Right ventricle myocardium superior (tissue), 1 donor: ENCODE measurements at regions of chr1 and their contacts with region 1.

Region 1: DNA sequence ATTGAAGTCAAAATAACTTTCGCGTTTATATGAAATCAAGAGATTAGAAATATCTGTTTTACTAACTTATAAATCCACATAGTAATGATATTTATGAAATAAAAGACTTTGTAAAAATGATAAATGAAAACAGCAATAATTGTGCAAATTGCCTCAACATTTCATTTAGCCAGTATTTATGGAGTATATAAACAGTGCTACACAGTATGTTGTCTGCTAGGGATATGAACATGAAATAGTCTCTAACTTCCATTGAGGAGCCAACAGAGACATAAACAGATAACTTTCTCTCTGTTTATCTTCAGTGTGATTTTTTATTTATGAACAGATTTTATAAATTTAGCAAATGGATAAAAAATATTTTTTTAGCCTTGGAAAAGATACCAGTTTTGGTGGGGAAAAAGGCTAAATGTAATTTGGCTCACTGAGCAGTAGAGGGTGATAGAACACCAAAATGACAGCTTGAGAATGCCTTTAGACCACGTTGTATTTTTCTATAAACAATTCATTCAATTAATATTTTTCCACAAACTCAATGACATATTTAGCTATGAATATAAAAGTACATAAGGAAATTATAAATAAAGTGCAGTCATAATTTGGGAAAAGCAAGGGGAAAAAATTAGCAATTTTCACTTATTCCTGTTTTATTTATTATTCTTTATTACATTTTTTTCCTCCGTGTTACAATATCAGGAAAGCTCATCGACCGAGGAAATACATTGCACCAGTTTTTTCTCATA is 47.5 kb upstream of the EEIG2 start:
- DNase-seq: no peak
- ATAC-seq: peak; percentile 68

Region 2: DNA sequence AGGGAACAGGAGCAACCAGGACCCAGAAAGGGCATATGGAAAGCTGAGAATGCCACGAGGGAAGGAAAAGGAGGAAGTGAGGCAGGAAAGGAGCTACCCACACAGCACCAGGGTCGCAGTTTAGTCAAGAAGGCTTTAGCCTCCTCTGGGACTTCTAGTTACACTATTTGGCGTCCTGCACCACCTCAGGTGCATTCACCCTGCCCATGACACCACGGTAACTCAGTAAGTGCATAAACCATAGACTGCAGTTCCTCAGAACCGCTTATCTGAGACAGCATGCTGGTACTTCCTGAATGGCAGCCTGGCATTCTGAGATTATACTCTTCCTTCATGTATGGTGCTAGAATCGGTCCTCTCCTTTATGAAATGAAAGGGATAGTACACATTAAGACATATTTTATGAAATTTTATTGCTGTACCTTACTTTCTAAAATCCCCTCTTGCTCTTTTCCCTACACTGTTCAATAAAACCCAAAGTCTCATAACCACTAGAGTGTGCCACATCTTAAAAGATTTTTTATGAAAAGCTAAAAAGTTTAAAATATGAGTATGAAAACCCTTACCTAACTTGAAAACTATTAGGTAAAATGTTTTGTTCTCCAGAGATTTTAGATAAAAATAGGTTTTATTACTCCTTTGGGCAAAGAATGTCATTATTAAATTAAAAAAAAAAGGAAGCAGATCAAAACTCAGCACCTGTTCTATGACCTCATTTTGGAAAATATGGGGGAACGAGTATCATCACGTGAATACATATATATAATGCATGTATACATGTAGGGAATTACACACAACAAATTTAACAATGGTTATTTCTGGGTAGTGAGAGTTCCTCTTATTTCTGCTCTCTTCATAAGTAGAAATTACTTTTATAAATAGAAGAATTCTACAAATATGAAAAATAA is 614.7 kb before region 1 on chr1:
- intact Hi-C with region 1: no loop called
- DNase-seq: no peak
- ATAC-seq: no peak

Region 3: DNA sequence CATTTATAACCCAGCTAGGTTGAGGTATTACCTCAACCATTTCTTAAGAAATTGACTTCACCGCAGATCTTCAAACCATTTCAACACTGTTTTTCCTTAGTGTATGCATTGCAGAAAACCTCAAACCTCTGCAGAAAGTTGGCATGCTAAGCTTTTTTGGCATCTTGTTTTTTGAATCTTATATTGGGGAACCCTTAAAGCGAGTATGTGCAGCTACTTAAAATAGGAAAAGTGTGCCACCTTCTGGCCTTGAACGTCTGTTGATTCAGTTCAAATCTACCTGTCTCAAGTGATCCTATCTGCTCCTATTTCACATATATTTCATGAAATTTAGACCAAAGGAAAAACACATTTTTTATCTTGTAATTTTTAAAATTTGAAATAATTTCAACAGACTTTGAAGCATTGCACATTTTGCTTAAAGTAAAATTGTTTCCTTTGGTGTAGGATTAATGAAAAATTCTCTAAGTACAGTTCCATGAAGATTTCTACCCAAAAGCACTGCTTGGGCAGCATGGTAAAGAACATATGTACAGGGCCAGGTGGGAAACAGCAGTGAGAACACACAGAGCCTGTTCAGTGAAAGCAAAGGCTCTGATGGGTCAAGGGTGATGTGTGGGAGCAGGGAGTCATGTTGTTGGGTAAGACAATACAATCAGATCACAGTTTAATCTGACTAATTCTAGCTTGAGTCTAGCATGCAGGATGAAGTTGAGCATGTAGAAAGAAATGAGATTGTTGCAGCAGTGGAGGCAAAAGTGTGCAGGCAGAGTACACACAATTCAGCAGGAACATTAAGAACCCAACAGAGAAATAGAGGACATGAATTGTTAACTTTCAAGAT is 131.3 kb after region 1 on chr1:
- intact Hi-C with region 1: loop called (anchors 2 kb)
- DNase-seq: no peak
- ATAC-seq: peak; percentile 78